ENCODE measurements at regions of chr1 and their contacts with region 1.

Region 1: GRCh38 chr1:202122639-202123335 is at the start of gene GPR37L1:
- DNase-seq: no peak

Region 2: GRCh38 chr1:201850053-201850397 is 272.8 kb before region 1 on chr1:
- in situ Hi-C with region 1: no loop called
- DNase-seq: no peak

Region 3: GRCh38 chr1:201895913-201896807 is 226.6 kb before region 1 on chr1:
- in situ Hi-C with region 1: loop called (anchors 25 kb)
- DNase-seq: peak; percentile 87

Region 4: GRCh38 chr1:202009326-202010179 is 113.2 kb before region 1 on chr1:
- in situ Hi-C with region 1: loop called (anchors 10 kb)
- DNase-seq: peak; percentile 69

Measured in KBM-7 (cell line).